HCT116 (cell line): ENCODE measurements at regions of chr1 and their contacts with region 1.

Region 1: DNA sequence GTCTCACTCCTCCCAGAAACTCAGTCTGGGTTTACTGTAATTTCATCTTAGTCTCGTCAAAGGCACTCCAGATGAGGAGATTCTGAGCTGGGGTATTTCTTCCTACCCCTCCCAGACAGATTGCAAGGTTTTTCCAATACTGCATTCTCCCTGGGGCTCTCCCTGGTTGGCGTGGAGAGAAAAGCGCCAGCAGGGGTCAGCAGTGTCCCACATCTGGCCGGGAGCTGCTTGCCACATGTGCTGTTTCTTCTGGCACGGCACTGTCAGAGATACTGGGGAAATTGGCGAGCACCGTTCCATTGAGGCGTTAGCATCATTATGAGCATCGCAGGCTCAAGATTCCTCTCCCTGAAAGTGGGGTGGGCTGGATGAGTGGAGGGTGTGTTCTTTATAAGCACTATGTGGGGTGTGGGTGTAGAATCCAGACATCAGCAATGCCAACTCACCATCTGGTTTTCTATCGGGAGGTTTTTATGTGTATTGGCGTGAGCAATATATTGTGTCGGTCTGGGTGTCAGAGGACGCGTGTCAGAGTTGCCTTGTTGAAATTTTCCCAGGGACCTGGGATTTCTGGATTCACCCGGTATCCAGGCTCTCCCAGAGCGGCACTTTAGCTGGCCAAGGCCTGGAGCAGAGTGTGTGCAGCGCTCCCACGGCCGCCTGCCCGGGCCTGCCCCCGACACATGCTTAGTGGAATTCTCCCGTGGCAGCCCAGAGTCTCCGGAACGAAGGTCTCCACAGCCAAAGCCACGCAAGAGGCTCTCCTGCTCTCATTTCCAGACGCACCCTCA is 8.0 kb upstream of the NAV1 start:
- DNase-seq: peak; percentile 45
- ATAC-seq: peak; percentile 97
- H3K4me3 ChIP-seq: no peak overlapping the region
- H3K27ac ChIP-seq: no peak overlapping the region
- H3K4me1 ChIP-seq: peaks cover 14 to 17% of the 10 kb centered on the region in 2 experiments
- H3K27me3 ChIP-seq: no peaks in the 10 kb centered on the region
- CTCF ChIP-seq: peak; percentile 85 to 89 (median 87)
- POLR2A ChIP-seq: no peak
- RAD21 ChIP-seq: peak; percentile 95

Region 2: GRCh38 chr1:201295861-201296260 is 235.1 kb before region 1 on chr1:
- CTCF ChIA-PET with region 1: no interaction called
- POLR2A ChIA-PET with region 1: no interaction called
- RAD21 ChIA-PET with region 1: no interaction called
- intact Hi-C with region 1: no loop called
- DNase-seq: no peak
- ATAC-seq: peak; percentile 69
- H3K4me3 ChIP-seq: peak overlapping the region in 1 of 2 experiments; percentile 11; a peak in 2 of 4 replicates
- H3K27ac ChIP-seq: no peak overlapping the region
- H3K4me1 ChIP-seq: peaks cover 15 to 48% of the 10 kb centered on the region in 2 experiments
- H3K27me3 ChIP-seq: no peaks in the 10 kb centered on the region
- CTCF ChIP-seq: no peak
- POLR2A ChIP-seq: no peak
- RAD21 ChIP-seq: 0 out of 2 replicates have a peak, but pooled peaks have one; percentile 8

Region 3: GRCh38 chr1:201559679-201560162 is 28.8 kb after region 1 on chr1:
- CTCF ChIA-PET with region 1: interaction called, 11 read pairs
- POLR2A ChIA-PET with region 1: no interaction called
- RAD21 ChIA-PET with region 1: no interaction called
- intact Hi-C with region 1: no loop called
- DNase-seq: peak; percentile 79
- ATAC-seq: peak; percentile 99
- H3K4me3 ChIP-seq: no peak overlapping the region
- H3K27ac ChIP-seq: no peak overlapping the region
- H3K4me1 ChIP-seq: peaks cover 2 to 17% of the 10 kb centered on the region in 2 experiments; a peak in 3 of 4 replicates
- H3K27me3 ChIP-seq: no peaks in the 10 kb centered on the region
- CTCF ChIP-seq: peak; percentile 94 to 98 (median 96)
- POLR2A ChIP-seq: no peak
- RAD21 ChIP-seq: peak; percentile 100

Region 4: DNA sequence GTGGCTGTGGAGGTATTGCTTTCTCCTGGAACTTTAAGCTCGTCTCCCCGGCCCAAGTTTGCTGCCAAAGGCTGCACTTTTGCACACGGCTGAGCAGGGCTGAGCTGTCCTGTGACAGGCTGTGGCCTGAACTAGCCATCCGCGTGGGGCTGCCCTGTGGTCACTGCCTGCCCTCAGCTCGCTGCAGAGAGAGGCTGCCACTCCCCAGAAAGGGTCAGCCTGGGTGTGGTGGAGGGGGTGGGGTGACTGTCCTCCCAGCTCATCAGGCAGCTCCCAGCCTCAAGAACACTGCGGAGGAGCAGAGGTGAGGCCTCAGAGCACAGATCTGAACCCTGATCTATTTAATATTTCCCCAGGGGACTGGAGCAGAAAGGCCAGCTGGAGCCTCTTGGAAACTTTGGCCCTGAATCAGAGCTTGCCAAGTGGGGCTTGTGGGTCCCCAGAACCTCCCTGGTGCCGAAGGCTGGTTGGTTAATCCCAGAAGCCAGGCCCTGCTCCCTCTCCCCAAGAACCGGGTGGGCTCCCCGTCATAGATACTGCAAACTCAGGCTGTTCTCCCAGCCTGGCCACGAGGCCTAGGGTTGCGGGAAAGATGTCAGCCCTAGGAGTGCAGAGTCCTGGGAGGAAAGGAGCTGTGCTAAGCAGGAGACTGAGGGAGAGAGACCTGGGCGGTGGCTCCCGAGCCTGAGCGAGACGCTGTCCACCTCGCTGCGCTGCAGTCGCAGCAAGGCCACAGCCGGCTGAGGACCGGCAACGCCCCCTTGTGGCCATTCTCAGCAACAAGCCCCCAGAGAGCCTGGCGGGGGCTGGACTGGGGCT is 172.9 kb after region 1 on chr1:
- CTCF ChIA-PET with region 1: interaction called, 9 read pairs
- POLR2A ChIA-PET with region 1: no interaction called
- RAD21 ChIA-PET with region 1: no interaction called
- intact Hi-C with region 1: loop called (anchors 1 kb)
- DNase-seq: peak; percentile 51
- ATAC-seq: peak; percentile 99
- H3K4me3 ChIP-seq: no peak overlapping the region
- H3K27ac ChIP-seq: no peak overlapping the region
- H3K4me1 ChIP-seq: peaks cover 2 to 4% of the 10 kb centered on the region in 2 experiments; a peak in 1 of 4 replicates
- H3K27me3 ChIP-seq: no peaks in the 10 kb centered on the region
- CTCF ChIP-seq: peak; percentile 93 to 97 (median 96)
- POLR2A ChIP-seq: no peak
- RAD21 ChIP-seq: peak; percentile 99

Region 5: DNA sequence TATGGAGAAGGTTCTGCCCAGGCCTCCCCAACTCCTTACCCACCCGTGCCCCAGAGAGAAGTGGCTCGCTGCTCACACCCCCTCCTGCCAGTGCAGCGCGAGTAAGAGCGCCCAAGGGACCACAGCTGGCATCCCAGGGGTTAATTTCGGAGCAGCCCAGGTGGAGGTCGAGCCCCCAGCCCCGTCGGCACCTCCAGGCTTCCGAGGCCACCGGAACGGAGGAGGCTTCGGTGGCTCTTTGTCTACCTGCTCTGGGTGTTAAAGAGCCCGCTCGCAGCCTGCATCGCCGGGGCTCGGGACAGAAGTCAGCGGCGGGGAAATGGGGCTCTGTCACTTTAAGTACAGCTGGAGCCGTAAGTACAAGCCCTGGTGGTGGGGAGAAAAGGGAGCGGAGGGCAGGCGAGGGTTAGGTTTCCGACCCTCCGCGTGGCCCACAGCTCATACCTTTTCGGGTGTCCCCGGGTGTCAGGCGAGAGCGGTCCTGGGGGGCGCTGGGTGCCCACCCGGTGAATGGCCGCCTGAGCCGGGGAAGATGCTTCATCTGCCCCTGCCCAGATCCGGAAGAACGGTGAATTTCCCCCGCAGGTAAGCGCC is 208.7 kb after region 1 on chr1:
- CTCF ChIA-PET with region 1: no interaction called
- POLR2A ChIA-PET with region 1: no interaction called
- RAD21 ChIA-PET with region 1: no interaction called
- intact Hi-C with region 1: no loop called
- DNase-seq: peak; percentile 61
- ATAC-seq: peak; percentile 90
- H3K4me3 ChIP-seq: peak overlapping the region; percentile 85 to 89
- H3K27ac ChIP-seq: peak overlapping the region; percentile 55
- H3K4me1 ChIP-seq: peaks cover 19 to 48% of the 10 kb centered on the region in 2 experiments; a peak in 3 of 4 replicates
- H3K27me3 ChIP-seq: no peaks in the 10 kb centered on the region
- CTCF ChIP-seq: no peak
- POLR2A ChIP-seq: no peak
- RAD21 ChIP-seq: no peak

Region 6: GRCh38 chr1:201792534-201793305 is 261.8 kb after region 1 on chr1:
- CTCF ChIA-PET with region 1: interaction called, 13 read pairs
- POLR2A ChIA-PET with region 1: no interaction called
- RAD21 ChIA-PET with region 1: interaction called in 1 of 2 experiments, 4 read pairs
- intact Hi-C with region 1: loop called (anchors 1 kb)
- DNase-seq: peak; percentile 70
- ATAC-seq: peak; percentile 97
- H3K4me3 ChIP-seq: no peak overlapping the region
- H3K27ac ChIP-seq: no peak overlapping the region
- H3K4me1 ChIP-seq: no peaks in the 10 kb centered on the region
- H3K27me3 ChIP-seq: no peaks in the 10 kb centered on the region
- CTCF ChIP-seq: peak; percentile 97 to 99 (median 98)
- POLR2A ChIP-seq: no peak
- RAD21 ChIP-seq: peak; percentile 99

Region 7: GRCh38 chr1:201850053-201850397 is 319.1 kb after region 1 on chr1:
- CTCF ChIA-PET with region 1: no interaction called
- POLR2A ChIA-PET with region 1: no interaction called
- RAD21 ChIA-PET with region 1: no interaction called
- intact Hi-C with region 1: no loop called
- DNase-seq: no peak
- ATAC-seq: no peak; the same call in 1 of the 2 replicates
- H3K4me3 ChIP-seq: no peak overlapping the region
- H3K27ac ChIP-seq: peak overlapping the region; percentile 7; the same call in 1 of the 2 replicates
- H3K4me1 ChIP-seq: peaks cover 0 to 12% of the 10 kb centered on the region in 2 experiments; a peak in 2 of 4 replicates
- H3K27me3 ChIP-seq: no peaks in the 10 kb centered on the region
- CTCF ChIP-seq: no peak
- POLR2A ChIP-seq: no peak
- RAD21 ChIP-seq: no peak

Region 8: GRCh38 chr1:201877877-201878401 is 347.0 kb after region 1 on chr1:
- CTCF ChIA-PET with region 1: interaction called, 3 read pairs
- POLR2A ChIA-PET with region 1: no interaction called
- RAD21 ChIA-PET with region 1: no interaction called
- intact Hi-C with region 1: loop called (anchors 5 kb)
- DNase-seq: peak; percentile 46
- ATAC-seq: peak; percentile 42
- H3K4me3 ChIP-seq: no peak overlapping the region
- H3K27ac ChIP-seq: peak overlapping the region; percentile 15; the same call in 1 of the 2 replicates
- H3K4me1 ChIP-seq: peaks cover 7 to 25% of the 10 kb centered on the region in 2 experiments
- H3K27me3 ChIP-seq: no peaks in the 10 kb centered on the region
- CTCF ChIP-seq: peak; percentile 65 to 70 (median 69)
- POLR2A ChIP-seq: no peak
- RAD21 ChIP-seq: peak; percentile 80